ENCODE measurements at regions of chr12 and their contacts with region 1.

Region 1: GRCh38 chr12:31790759-31791158 is 61.9 kb upstream of the AMN1 start:
- DNase-seq: no peak
- H3K4me3 ChIP-seq: no peak overlapping the region
- H3K4me3 Mint-ChIP-seq: peak overlapping the region in 4 of 7 donors; percentile 3 to 52 (median 21)
- H3K27ac ChIP-seq: no peak overlapping the region
- H3K27ac Mint-ChIP-seq: peak overlapping the region in 6 of 8 donors; percentile 10 to 73 (median 51)
- H3K4me1 ChIP-seq: peaks cover 20% of the 10 kb centered on the region
- H3K4me1 Mint-ChIP-seq: peaks cover 31 to 32% (median 31%) of the 10 kb centered on the region in 3 donors
- H3K27me3 ChIP-seq: no peaks in the 10 kb centered on the region
- H3K27me3 Mint-ChIP-seq: no peaks in the 10 kb centered on the region

Region 2: GRCh38 chr12:31914927-31915326 is 124.2 kb after region 1 on chr12:
- CTCF ChIA-PET with region 1: no interaction called
- POLR2A ChIA-PET with region 1: interaction called, 15 read pairs
- DNase-seq: no peak
- H3K4me3 ChIP-seq: no peak overlapping the region
- H3K4me3 Mint-ChIP-seq: no peak overlapping the region
- H3K27ac ChIP-seq: no peak overlapping the region
- H3K27ac Mint-ChIP-seq: no peak overlapping the region
- H3K4me1 ChIP-seq: no peaks in the 10 kb centered on the region
- H3K4me1 Mint-ChIP-seq: peaks cover 0 to 3% (median 0%) of the 10 kb centered on the region in 3 donors
- H3K27me3 ChIP-seq: no peaks in the 10 kb centered on the region
- H3K27me3 Mint-ChIP-seq: no peaks in the 10 kb centered on the region